CD4-positive, alpha-beta T cell (primary cell): ENCODE measurements at regions of chr10 and their contacts with region 1.

Region 1: GRCh38 chr10:50624866-50625692 is 1.3 kb upstream of the SGMS1 start:
- DNase-seq: peak; percentile 35 to 88 (median 54)
- ATAC-seq: peak; percentile 24
- H3K4me3 ChIP-seq: peak overlapping the region; percentile 71
- H3K4me3 Mint-ChIP-seq: peak overlapping the region; percentile 99
- H3K27ac ChIP-seq: peak overlapping the region; percentile 98
- H3K27ac Mint-ChIP-seq: peak overlapping the region; percentile 97
- H3K4me1 ChIP-seq: peaks cover 29% of the 10 kb centered on the region
- H3K4me1 Mint-ChIP-seq: peaks cover 35% of the 10 kb centered on the region
- H3K27me3 ChIP-seq: no peaks in the 10 kb centered on the region
- H3K27me3 Mint-ChIP-seq: no peaks in the 10 kb centered on the region
- CTCF ChIP-seq: peak; percentile 52

Region 2: GRCh38 chr10:50421026-50421719 is 203.9 kb before region 1 on chr10:
- CTCF ChIA-PET with region 1: interaction called, 4 read pairs
- POLR2A ChIA-PET with region 1: interaction called, 4 read pairs
- intact Hi-C with region 1: loop called in 1 of 2 experiments (anchors 10 kb)
- DNase-seq: peak in 6 of 14 experiments; percentile 4 to 57 (median 38)
- ATAC-seq: peak; percentile 32
- H3K4me3 ChIP-seq: no peak overlapping the region
- H3K4me3 Mint-ChIP-seq: peak overlapping the region; percentile 17
- H3K27ac ChIP-seq: no peak overlapping the region
- H3K27ac Mint-ChIP-seq: no peak overlapping the region
- H3K4me1 ChIP-seq: peaks cover 17% of the 10 kb centered on the region
- H3K4me1 Mint-ChIP-seq: peaks cover 50% of the 10 kb centered on the region
- H3K27me3 ChIP-seq: no peaks in the 10 kb centered on the region
- H3K27me3 Mint-ChIP-seq: no peaks in the 10 kb centered on the region
- CTCF ChIP-seq: peak; percentile 67

Region 3: DNA sequence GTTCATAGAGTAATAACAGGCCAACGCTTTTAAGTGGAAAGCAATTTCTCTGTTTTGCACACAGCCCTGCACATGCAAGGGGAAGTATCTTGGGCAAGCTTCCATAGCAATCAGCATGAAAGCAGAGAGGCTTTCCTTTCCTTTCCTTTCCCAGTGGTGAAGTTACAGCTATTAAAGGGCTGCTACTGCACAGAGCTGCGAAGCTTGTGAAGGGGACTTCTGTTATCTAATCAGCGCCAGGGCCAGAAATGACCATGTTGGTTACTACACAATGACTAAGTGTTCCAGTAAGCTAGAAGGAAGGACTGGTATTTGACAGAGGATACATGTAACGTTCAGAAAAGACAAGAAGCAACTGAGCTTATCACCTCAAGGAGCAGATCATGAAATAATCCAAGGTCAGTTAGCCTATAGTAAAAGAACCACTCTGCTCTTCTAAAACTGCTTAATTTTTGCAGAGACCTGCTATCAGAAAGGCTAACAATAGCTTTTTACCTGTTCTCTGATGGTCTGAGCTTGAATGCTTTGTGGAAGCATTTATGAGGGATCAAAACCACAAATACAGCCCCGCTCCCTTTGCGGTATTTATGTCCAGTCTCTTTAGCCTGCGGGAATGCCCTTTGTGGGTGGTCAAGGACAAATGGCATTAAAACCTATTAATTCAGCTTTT is 47.3 kb before region 1 on chr10:
- CTCF ChIA-PET with region 1: no interaction called
- POLR2A ChIA-PET with region 1: interaction called, 11 read pairs
- intact Hi-C with region 1: no loop called
- DNase-seq: peak in 1 of 14 experiments; percentile 4
- ATAC-seq: no peak
- H3K4me3 ChIP-seq: no peak overlapping the region
- H3K4me3 Mint-ChIP-seq: no peak overlapping the region
- H3K27ac ChIP-seq: no peak overlapping the region
- H3K27ac Mint-ChIP-seq: no peak overlapping the region
- H3K4me1 ChIP-seq: peaks cover 20% of the 10 kb centered on the region
- H3K4me1 Mint-ChIP-seq: peaks cover 89% of the 10 kb centered on the region
- H3K27me3 ChIP-seq: no peaks in the 10 kb centered on the region
- H3K27me3 Mint-ChIP-seq: no peaks in the 10 kb centered on the region
- CTCF ChIP-seq: no peak

Region 4: GRCh38 chr10:50636618-50637579 is 11.8 kb after region 1 on chr10:
- CTCF ChIA-PET with region 1: no interaction called
- POLR2A ChIA-PET with region 1: interaction called, 100 read pairs
- intact Hi-C with region 1: no loop called
- DNase-seq: peak in 4 of 14 experiments; percentile 24 to 73 (median 55)
- ATAC-seq: peak; percentile 79
- H3K4me3 ChIP-seq: peak overlapping the region; percentile 27
- H3K4me3 Mint-ChIP-seq: peak overlapping the region; percentile 67
- H3K27ac ChIP-seq: no peak overlapping the region
- H3K27ac Mint-ChIP-seq: peak overlapping the region; percentile 45
- H3K4me1 ChIP-seq: peaks cover 27% of the 10 kb centered on the region
- H3K4me1 Mint-ChIP-seq: peaks cover 49% of the 10 kb centered on the region
- H3K27me3 ChIP-seq: no peaks in the 10 kb centered on the region
- H3K27me3 Mint-ChIP-seq: no peaks in the 10 kb centered on the region
- CTCF ChIP-seq: no peak

Region 5: DNA sequence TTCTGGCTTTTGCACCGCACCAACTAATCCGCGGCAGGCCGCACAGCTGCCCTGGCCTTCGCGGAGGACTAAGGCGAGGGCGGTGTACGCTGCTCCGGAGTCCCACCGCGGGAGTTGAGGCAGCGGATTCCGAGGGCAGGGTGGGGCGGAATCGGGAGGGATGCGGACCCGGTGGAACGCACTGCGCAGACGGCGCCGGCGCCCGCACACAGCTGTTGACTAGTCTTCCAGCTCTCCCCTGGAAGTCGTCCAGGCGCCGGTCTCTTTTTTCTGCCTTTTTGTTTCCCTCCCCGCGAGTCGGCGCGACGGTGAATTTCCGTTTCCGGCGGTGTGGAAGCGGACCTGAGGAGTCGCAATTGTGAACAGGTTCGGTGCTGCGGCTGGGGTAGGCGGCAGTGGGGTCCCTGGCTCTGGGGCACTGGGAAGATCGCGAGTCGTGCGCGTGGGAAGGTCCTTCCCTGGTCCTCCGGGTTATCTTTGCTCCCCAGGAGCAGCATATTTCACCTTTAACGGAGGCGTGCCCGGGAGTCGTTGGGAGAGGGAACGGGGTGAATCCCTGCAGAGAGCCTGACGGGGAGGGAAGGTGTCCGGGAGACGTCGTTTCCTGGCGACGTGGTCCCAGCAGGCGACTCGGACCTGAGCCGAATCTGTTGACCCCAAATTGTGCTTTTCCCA is 114.7 kb after region 1 on chr10 and contains the start of gene ASAH2B:
- CTCF ChIA-PET with region 1: no interaction called
- POLR2A ChIA-PET with region 1: interaction called, 18 read pairs
- intact Hi-C with region 1: loop called in 1 of 2 experiments (anchors 10 kb)
- DNase-seq: peak; percentile 61 to 83 (median 72)
- ATAC-seq: peak; percentile 79
- H3K4me3 ChIP-seq: peak within 1 kb of the TSS; percentile 76
- H3K4me3 Mint-ChIP-seq: peak within 1 kb of the TSS; percentile 97
- H3K27ac ChIP-seq: peak within 1 kb of the TSS; percentile 17 to 56
- H3K27ac Mint-ChIP-seq: peak within 1 kb of the TSS; percentile 81
- H3K4me1 ChIP-seq: peaks cover 16% of the 10 kb centered on the region
- H3K4me1 Mint-ChIP-seq: peaks cover 35% of the 10 kb centered on the region
- H3K27me3 ChIP-seq: no peaks in the 10 kb centered on the region
- H3K27me3 Mint-ChIP-seq: no peaks in the 10 kb centered on the region
- CTCF ChIP-seq: no peak
- total RNA-seq, gene ASAH2B: 1.4 to 1.6 TPM

Region 6: GRCh38 chr10:50896721-50897120 is 271.6 kb after region 1 on chr10:
- CTCF ChIA-PET with region 1: no interaction called
- POLR2A ChIA-PET with region 1: no interaction called
- intact Hi-C with region 1: no loop called
- DNase-seq: no peak
- ATAC-seq: no peak
- H3K4me3 ChIP-seq: no peak overlapping the region
- H3K4me3 Mint-ChIP-seq: no peak overlapping the region
- H3K27ac ChIP-seq: no peak overlapping the region
- H3K27ac Mint-ChIP-seq: no peak overlapping the region
- H3K4me1 ChIP-seq: no peaks in the 10 kb centered on the region
- H3K4me1 Mint-ChIP-seq: no peaks in the 10 kb centered on the region
- H3K27me3 ChIP-seq: peaks cover 0 to 12% of the 10 kb centered on the region in 2 experiments
- H3K27me3 Mint-ChIP-seq: peaks cover 26% of the 10 kb centered on the region
- CTCF ChIP-seq: no peak